ENCODE measurements at regions of chr6 and their contacts with region 1.

Region 1: DNA sequence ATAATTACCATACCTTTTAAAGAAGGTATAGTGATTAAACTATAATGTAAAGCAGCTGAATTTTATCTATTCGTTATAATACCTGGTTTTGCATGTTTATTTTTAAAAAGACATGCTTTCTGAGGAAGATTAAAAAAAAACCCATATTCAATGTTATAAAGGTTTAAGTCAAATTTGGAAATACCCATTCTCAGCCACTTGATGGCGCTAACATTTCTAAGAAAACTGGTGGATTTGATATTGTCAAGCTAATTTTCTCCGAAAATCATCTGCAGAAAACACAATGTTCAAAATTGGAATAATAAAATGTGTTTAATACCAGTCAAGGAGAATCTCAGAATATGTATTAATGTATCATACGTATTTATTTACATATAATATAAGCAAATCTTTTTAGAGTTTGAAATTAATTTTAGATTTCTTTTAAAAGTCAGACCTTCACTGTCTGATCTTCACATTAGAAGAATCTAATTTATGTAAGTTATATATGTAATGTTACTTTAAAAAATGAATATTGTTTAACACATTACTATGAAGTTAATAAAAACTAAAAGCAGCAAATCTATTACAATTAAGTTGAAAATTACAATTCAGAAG is 35.0 kb downstream of the SHPRH start:
- DNase-seq: peak; percentile 57 to 76 (median 73)
- H3K4me3 ChIP-seq: no peak overlapping the region
- H3K27ac ChIP-seq: no peak overlapping the region
- H3K4me1 ChIP-seq: no peaks in the 10 kb centered on the region
- H3K27me3 ChIP-seq: no peaks in the 10 kb centered on the region

Region 2: GRCh38 chr6:145673504-145673903 is 255.6 kb before region 1 on chr6:
- CTCF ChIA-PET with region 1: no interaction called
- POLR2A ChIA-PET with region 1: no interaction called
- DNase-seq: no peak
- H3K4me3 ChIP-seq: no peak overlapping the region
- H3K27ac ChIP-seq: no peak overlapping the region
- H3K4me1 ChIP-seq: no peaks in the 10 kb centered on the region
- H3K27me3 ChIP-seq: no peaks in the 10 kb centered on the region

Region 3: GRCh38 chr6:145734486-145735355 is 194.4 kb before region 1 on chr6:
- CTCF ChIA-PET with region 1: no interaction called
- POLR2A ChIA-PET with region 1: no interaction called
- DNase-seq: peak; percentile 76 to 90 (median 86)
- H3K4me3 ChIP-seq: peak overlapping the region; percentile 75 to 98 (median 84)
- H3K27ac ChIP-seq: peak overlapping the region; percentile 88 to 96
- H3K4me1 ChIP-seq: peaks cover 9 to 38% (median 21%) of the 10 kb centered on the region in 4 experiments
- H3K27me3 ChIP-seq: no peaks in the 10 kb centered on the region

Region 4: DNA sequence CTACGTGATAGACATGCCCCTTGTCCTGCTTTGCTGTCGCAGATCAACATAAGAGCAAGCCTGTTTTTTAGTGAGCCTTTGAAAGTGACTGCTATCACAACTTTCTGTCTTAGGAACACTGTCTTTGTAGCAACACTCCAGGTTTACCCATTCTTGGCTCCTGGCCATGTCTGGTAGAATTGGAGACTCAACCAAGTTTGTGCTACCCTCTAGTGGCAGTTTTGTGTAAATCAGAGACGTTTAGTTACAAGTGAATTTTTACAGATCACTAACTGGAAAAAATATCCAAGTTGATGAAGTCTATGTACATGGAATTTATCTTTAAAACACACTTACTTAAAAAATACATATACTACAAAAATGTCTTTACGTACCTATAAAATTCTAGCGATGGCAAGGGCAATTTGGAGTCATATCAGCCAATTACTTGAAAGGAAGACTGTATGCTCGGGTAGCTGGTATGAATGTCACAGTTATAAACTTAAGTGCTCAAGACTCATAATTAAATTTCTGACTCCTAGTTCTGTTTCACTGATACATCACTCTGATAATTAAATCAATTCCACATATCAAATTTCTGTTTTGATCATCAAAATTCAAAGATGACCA is 771.0 kb after region 1 on chr6:
- CTCF ChIA-PET with region 1: interaction called, 21 read pairs
- POLR2A ChIA-PET with region 1: no interaction called
- DNase-seq: peak; percentile 80 to 91 (median 84)
- H3K4me3 ChIP-seq: no peak overlapping the region
- H3K27ac ChIP-seq: no peak overlapping the region
- H3K4me1 ChIP-seq: peaks cover 0 to 2% (median 0%) of the 10 kb centered on the region in 4 experiments
- H3K27me3 ChIP-seq: no peaks in the 10 kb centered on the region

Region 5: DNA sequence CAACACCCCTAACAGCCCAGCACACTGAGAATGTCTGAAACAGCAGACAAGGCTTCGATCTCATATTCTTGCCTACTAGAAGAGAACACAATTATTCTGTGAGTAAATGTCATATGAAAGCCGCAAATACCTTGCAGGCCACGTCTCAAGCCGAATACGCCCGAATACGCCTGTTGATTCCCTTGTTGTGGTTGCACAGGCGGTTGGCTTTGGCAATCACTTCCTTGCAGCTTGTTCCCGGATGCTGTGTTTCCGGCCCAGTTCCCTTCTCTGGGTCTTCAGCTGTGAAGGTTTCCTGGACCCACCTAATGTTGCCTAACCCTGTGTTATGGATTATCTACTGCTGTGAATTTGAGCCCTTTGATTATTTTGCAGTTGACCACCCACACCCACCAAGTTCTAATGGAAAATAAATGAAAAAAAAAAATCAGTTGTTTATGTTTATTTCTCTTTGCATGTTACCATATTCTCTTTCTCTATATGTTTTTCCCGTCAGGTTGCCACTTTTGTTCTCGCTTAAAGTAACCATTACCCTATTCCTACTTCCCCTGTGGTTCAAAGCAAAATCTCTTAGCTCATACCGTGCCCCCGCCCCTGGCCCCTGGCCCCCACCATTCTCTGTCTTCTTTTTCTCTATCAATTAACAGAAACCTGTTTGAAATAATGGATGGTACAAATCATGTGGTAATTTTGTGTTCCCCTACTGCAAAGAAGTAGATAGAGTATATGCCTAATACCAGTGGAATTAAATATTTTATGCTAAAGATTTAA is 842.0 kb after region 1 on chr6:
- CTCF ChIA-PET with region 1: interaction called, 30 read pairs
- POLR2A ChIA-PET with region 1: interaction called, 3 read pairs
- DNase-seq: peak; percentile 97 to 100 (median 99)
- H3K4me3 ChIP-seq: peak overlapping the region in 5 of 7 experiments; percentile 15 to 60 (median 46)
- H3K27ac ChIP-seq: peak overlapping the region; percentile 52 to 78
- H3K4me1 ChIP-seq: peaks cover 12 to 42% (median 28%) of the 10 kb centered on the region in 4 experiments
- H3K27me3 ChIP-seq: no peaks in the 10 kb centered on the region

Region 6: DNA sequence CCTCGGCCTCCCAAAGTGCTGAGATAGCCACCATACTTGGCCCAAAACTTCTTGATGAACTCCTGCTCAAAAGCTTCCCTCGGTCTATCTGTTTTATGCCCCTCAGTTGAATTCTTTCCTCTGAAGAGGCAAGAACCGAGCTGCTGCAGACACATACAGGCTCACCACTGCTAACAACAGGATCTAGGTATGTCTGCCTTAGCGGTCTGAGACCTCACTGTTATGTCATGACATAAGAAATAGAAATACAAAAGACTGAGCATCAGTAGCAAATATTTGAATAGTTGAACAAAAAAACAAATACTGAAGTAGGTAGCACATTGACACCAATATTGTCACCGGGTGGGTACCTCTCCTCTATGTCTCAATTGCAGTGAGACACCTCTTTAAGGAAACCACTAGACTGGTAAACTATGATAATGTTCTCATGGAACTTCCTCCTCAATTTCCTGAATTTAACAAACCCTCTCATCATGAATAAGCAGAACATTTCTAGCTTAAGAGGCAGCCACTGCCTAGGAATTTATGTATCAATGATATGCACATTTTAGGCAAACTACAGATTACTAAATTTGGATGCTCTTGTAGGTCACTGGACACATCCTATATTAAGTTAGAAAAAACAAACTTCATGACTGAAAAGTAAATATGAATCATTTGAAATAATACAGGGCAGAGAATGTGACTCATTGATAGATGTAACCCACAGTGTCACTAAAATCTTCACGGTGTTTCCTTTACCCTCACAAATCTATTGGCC is 1265.7 kb after region 1 on chr6:
- CTCF ChIA-PET with region 1: no interaction called
- POLR2A ChIA-PET with region 1: no interaction called
- DNase-seq: peak; percentile 61 to 83 (median 72)
- H3K4me3 ChIP-seq: peak overlapping the region in 1 of 7 experiments; percentile 33
- H3K27ac ChIP-seq: peak overlapping the region in 1 of 2 experiments; percentile 32
- H3K4me1 ChIP-seq: peaks cover 7 to 27% (median 17%) of the 10 kb centered on the region in 4 experiments
- H3K27me3 ChIP-seq: no peaks in the 10 kb centered on the region

Measured in common myeloid progenitor, CD34-positive (primary cell).